B cell (primary cell): ENCODE measurements at regions of chr14 and their contacts with region 1.

Region 1: DNA sequence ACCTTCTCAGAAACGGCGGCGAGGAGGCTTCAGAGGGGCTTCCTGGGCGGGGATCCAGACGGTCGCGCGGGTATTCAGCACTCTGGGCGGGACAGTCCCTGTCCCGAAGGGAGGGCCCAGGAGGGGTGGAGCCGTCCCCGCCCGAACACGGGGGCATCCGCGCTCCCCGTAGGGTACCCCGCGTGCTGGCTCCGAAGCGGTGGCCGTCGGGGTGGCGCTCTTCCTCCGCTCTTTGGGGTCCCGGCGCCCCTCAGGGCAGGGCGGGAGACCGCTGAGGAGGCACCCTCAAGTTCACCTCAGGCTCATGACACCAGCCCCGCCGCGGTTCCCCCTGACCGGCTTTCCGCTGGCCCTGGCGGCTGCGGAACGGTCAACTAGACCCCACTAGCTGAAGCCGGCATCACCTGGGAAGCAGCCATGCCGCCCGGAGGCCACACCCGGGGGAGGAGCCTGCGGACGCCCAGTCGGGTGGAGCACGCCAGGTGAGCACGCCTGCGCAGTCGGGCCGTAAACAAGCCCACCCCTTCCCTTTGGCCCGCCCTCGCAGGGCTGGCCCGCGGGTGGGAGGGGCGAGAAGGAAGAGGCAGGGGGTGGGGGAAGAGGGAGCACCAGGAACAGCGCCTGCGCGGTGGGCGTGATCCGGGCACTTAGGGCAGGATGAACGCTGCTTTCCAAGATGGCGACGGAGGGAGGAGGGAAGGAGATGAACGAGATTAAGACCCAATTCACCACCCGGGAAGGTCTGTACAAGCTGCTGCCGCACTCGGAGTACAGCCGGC is at the start of gene WDR20:
- DNase-seq: peak; percentile 98
- ATAC-seq: peak; percentile 93
- H3K4me3 ChIP-seq: peak within 1 kb of the TSS; percentile 66 to 94 (median 88)
- H3K4me3 Mint-ChIP-seq: peak within 1 kb of the TSS; percentile 89
- H3K27ac ChIP-seq: peak within 1 kb of the TSS; percentile 88 to 90
- H3K27ac Mint-ChIP-seq: peak within 1 kb of the TSS; percentile 94
- H3K4me1 ChIP-seq: peaks cover 14 to 16% of the 10 kb centered on the region in 2 donors
- H3K4me1 Mint-ChIP-seq: peaks cover 24% of the 10 kb centered on the region
- H3K27me3 ChIP-seq: no peaks in the 10 kb centered on the region
- H3K27me3 Mint-ChIP-seq: no peaks in the 10 kb centered on the region
- CTCF ChIP-seq: no peak
- total RNA-seq, gene WDR20: 62.8 and 64.0 TPM in 2 replicates

Region 2: GRCh38 chr14:102103062-102103695 is 36.3 kb before region 1 on chr14:
- CTCF ChIA-PET with region 1: no interaction called
- POLR2A ChIA-PET with region 1: no interaction called
- intact Hi-C with region 1: loop called (anchors 1 kb)
- DNase-seq: peak; percentile 63
- ATAC-seq: peak; percentile 93
- H3K4me3 ChIP-seq: no peak overlapping the region
- H3K4me3 Mint-ChIP-seq: no peak overlapping the region
- H3K27ac ChIP-seq: no peak overlapping the region
- H3K27ac Mint-ChIP-seq: peak overlapping the region; percentile 68
- H3K4me1 ChIP-seq: peaks cover 16 to 20% of the 10 kb centered on the region in 2 donors
- H3K4me1 Mint-ChIP-seq: peaks cover 28% of the 10 kb centered on the region
- H3K27me3 ChIP-seq: no peaks in the 10 kb centered on the region
- H3K27me3 Mint-ChIP-seq: no peaks in the 10 kb centered on the region
- CTCF ChIP-seq: no peak

Region 3: GRCh38 chr14:102248121-102248520 is 108.7 kb after region 1 on chr14:
- CTCF ChIA-PET with region 1: no interaction called
- POLR2A ChIA-PET with region 1: no interaction called
- intact Hi-C with region 1: no loop called
- DNase-seq: no peak
- ATAC-seq: no peak
- H3K4me3 ChIP-seq: no peak overlapping the region
- H3K4me3 Mint-ChIP-seq: no peak overlapping the region
- H3K27ac ChIP-seq: no peak overlapping the region
- H3K27ac Mint-ChIP-seq: no peak overlapping the region
- H3K4me1 ChIP-seq: no peaks in the 10 kb centered on the region
- H3K4me1 Mint-ChIP-seq: no peaks in the 10 kb centered on the region
- H3K27me3 ChIP-seq: no peaks in the 10 kb centered on the region
- H3K27me3 Mint-ChIP-seq: no peaks in the 10 kb centered on the region
- CTCF ChIP-seq: no peak

Region 4: GRCh38 chr14:102262929-102263462 is 123.6 kb after region 1 on chr14:
- CTCF ChIA-PET with region 1: no interaction called
- POLR2A ChIA-PET with region 1: interaction called, 10 read pairs
- intact Hi-C with region 1: no loop called
- DNase-seq: no peak
- ATAC-seq: no peak
- H3K4me3 ChIP-seq: no peak overlapping the region
- H3K4me3 Mint-ChIP-seq: no peak overlapping the region
- H3K27ac ChIP-seq: no peak overlapping the region
- H3K27ac Mint-ChIP-seq: no peak overlapping the region
- H3K4me1 ChIP-seq: no peaks in the 10 kb centered on the region
- H3K4me1 Mint-ChIP-seq: no peaks in the 10 kb centered on the region
- H3K27me3 ChIP-seq: no peaks in the 10 kb centered on the region
- H3K27me3 Mint-ChIP-seq: peaks cover 5% of the 10 kb centered on the region
- CTCF ChIP-seq: no peak

Region 5: DNA sequence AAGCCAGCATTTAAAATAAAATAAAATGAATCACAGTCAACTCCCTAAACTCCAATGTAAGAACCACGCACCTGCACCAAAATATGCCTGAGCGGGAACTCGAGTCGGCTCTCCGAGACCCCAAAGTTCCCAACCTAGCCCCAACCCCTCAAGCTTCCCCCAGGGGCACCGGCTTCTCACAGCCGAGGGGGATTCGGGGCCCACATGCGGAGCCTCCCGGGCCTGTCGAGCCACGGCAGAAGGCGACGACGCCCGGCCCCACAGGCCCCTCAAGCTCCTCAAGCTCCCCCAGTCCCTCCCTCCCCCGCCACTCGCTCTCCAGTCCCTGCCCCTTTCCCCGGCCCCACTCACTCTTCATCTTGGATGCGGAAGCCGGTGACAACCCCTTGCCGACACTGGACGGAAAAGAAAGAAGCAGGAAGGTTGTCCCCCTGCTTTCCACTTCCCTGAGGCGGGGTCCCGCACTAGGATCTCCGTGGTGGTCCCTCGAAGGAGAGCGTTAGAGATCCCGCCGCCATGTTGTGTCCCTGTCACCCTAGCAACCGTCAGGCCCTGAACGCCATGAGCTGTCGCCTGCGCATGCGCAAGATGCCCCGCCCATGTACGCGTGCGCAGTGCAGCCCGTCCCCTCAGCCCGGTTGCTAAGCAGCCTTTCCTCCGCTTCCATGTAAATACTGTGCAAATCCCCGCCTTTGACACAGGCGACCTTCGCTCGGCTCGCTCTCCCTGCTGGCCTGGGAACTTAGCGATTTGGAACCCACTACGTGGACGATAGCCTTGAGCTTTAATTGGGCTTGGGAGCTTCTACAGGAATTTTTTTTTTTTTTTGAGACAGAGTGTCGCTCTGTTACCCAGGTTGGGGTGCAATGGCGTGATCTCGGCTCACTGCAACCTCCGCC is 165.4 kb after region 1 on chr14 and contains the start of gene MOK:
- CTCF ChIA-PET with region 1: no interaction called
- POLR2A ChIA-PET with region 1: no interaction called
- intact Hi-C with region 1: loop called (anchors 1 kb)
- DNase-seq: peak; percentile 98
- ATAC-seq: peak; percentile 90
- H3K4me3 ChIP-seq: peak within 1 kb of the TSS; percentile 80 to 82 (median 81)
- H3K4me3 Mint-ChIP-seq: peak within 1 kb of the TSS; percentile 94
- H3K27ac ChIP-seq: peak within 1 kb of the TSS; percentile 72 to 89
- H3K27ac Mint-ChIP-seq: peak within 1 kb of the TSS; percentile 96
- H3K4me1 ChIP-seq: peaks cover 5 to 11% of the 10 kb centered on the region in 2 donors
- H3K4me1 Mint-ChIP-seq: peaks cover 6% of the 10 kb centered on the region
- H3K27me3 ChIP-seq: no peaks in the 10 kb centered on the region
- H3K27me3 Mint-ChIP-seq: no peaks in the 10 kb centered on the region
- CTCF ChIP-seq: no peak
- total RNA-seq, gene MOK: 2.9 and 3.0 TPM in 2 replicates